Activated naive CD4-positive, alpha-beta T cell treated with anti-CD3 and anti-CD28 coated beads for 36 hours (primary cell): ENCODE measurements at regions of chr4 and their contacts with region 1.

Region 1: GRCh38 chr4:83074086-83074704 is 39.2 kb downstream of the COPS4 start:
- DNase-seq: peak; percentile 76
- H3K4me3 Mint-ChIP-seq: no peak overlapping the region
- H3K27ac Mint-ChIP-seq: no peak overlapping the region
- H3K4me1 Mint-ChIP-seq: peaks cover 13% of the 10 kb centered on the region
- H3K27me3 Mint-ChIP-seq: no peaks in the 10 kb centered on the region

Region 2: DNA sequence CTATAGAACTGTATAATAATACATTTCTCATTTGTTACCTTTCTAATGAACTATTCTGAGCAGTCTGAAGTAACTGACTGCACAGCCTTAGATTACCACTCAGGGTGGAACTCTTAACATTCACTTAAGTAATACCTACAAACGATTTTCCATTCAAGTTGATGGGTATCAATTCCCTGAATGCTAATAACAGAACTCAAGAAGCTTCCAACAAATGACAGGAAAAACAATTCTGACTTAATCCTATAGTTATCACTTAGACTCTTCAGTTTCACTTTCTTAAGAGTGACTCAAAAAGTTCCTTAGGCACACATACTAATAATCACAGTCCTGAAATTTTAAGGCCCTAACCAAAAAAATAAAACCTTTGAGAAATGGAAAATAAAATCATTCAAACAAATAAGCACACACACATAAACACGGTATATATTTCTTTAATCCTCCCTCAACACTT is 721.3 kb before region 1 on chr4:
- CTCF ChIA-PET with region 1: no interaction called
- intact Hi-C with region 1: no loop called
- DNase-seq: no peak
- H3K4me3 Mint-ChIP-seq: no peak overlapping the region
- H3K27ac Mint-ChIP-seq: peak overlapping the region; percentile 78
- H3K4me1 Mint-ChIP-seq: peaks cover 55% of the 10 kb centered on the region
- H3K27me3 Mint-ChIP-seq: no peaks in the 10 kb centered on the region

Region 3: DNA sequence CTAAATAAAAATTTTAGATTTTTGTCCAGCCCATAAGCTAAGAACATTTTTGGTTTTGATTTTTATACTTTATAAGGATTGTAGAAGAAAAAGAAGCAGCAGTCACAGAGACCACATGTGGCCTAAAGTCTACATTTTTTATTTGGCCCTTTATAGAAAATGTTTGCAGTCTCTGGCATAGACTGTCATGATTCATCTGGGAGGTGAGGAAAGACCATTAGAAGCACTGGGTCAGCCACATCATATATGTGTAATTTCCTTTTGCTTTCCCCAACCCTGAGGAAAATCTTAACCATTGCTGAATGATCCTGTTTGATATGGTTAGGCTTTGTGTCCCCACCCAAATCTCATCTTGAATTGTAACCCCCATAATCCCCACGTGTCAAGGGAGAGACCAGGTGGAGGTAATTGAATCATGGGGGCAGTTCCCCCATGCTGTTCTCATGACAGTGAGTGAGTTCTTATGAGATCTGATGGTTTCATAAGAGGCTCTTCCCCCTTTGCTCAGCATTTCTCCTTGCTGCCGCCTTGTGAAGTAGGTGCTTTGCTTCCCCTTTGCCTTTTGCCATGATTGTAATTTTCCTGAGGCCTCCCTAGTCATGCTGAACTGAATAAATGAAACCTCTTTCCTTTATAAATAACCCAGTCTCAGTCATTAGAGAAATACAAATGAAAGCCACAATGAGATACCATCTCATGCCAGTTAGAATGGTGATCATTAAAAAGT is 51.3 kb before region 1 on chr4:
- CTCF ChIA-PET with region 1: no interaction called
- intact Hi-C with region 1: no loop called
- DNase-seq: no peak
- H3K4me3 Mint-ChIP-seq: no peak overlapping the region
- H3K27ac Mint-ChIP-seq: no peak overlapping the region
- H3K4me1 Mint-ChIP-seq: peaks cover 5% of the 10 kb centered on the region
- H3K27me3 Mint-ChIP-seq: no peaks in the 10 kb centered on the region

Region 4: GRCh38 chr4:83212041-83212851 is 138.1 kb after region 1 on chr4:
- CTCF ChIA-PET with region 1: interaction called, 7 read pairs
- intact Hi-C with region 1: loop called (anchors 1 kb)
- DNase-seq: peak; percentile 72
- H3K4me3 Mint-ChIP-seq: no peak overlapping the region
- H3K27ac Mint-ChIP-seq: peak overlapping the region; percentile 65
- H3K4me1 Mint-ChIP-seq: peaks cover 54% of the 10 kb centered on the region
- H3K27me3 Mint-ChIP-seq: no peaks in the 10 kb centered on the region

Region 5: GRCh38 chr4:83252782-83253405 is 178.7 kb after region 1 on chr4:
- CTCF ChIA-PET with region 1: interaction called, 24 read pairs
- intact Hi-C with region 1: loop called (anchors 1 kb)
- DNase-seq: peak; percentile 90
- H3K4me3 Mint-ChIP-seq: no peak overlapping the region
- H3K27ac Mint-ChIP-seq: no peak overlapping the region
- H3K4me1 Mint-ChIP-seq: peaks cover 6% of the 10 kb centered on the region
- H3K27me3 Mint-ChIP-seq: no peaks in the 10 kb centered on the region

Region 6: GRCh38 chr4:83348074-83348473 is 273.9 kb after region 1 on chr4:
- CTCF ChIA-PET with region 1: no interaction called
- intact Hi-C with region 1: loop called (anchors 1 kb)
- DNase-seq: no peak
- H3K4me3 Mint-ChIP-seq: no peak overlapping the region
- H3K27ac Mint-ChIP-seq: no peak overlapping the region
- H3K4me1 Mint-ChIP-seq: peaks cover 20% of the 10 kb centered on the region
- H3K27me3 Mint-ChIP-seq: no peaks in the 10 kb centered on the region

Region 7: DNA sequence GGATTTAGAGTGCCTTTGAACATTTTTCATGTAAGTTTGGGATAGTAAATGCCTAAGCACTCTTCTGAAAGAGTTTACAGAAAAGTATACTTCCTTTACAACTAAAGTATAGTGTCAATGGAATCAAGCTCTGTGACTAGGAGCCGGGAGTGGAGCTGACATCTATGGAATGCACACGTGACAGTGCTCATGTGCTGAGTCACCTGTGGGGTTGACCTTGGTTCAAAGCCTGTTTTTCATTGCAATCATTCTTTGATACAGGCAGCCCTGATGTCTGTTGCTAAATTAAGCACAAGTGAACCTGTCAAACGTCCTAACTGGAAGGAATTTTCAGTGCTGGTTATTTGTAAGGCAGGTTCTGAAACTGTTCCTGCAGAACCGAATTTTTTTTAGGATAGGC is 544.2 kb after region 1 on chr4:
- CTCF ChIA-PET with region 1: no interaction called
- intact Hi-C with region 1: no loop called
- DNase-seq: no peak
- H3K4me3 Mint-ChIP-seq: no peak overlapping the region
- H3K27ac Mint-ChIP-seq: no peak overlapping the region
- H3K4me1 Mint-ChIP-seq: no peaks in the 10 kb centered on the region
- H3K27me3 Mint-ChIP-seq: peaks cover 10% of the 10 kb centered on the region